ENCODE measurements at regions of chr14 and their contacts with region 1.

Region 1: DNA sequence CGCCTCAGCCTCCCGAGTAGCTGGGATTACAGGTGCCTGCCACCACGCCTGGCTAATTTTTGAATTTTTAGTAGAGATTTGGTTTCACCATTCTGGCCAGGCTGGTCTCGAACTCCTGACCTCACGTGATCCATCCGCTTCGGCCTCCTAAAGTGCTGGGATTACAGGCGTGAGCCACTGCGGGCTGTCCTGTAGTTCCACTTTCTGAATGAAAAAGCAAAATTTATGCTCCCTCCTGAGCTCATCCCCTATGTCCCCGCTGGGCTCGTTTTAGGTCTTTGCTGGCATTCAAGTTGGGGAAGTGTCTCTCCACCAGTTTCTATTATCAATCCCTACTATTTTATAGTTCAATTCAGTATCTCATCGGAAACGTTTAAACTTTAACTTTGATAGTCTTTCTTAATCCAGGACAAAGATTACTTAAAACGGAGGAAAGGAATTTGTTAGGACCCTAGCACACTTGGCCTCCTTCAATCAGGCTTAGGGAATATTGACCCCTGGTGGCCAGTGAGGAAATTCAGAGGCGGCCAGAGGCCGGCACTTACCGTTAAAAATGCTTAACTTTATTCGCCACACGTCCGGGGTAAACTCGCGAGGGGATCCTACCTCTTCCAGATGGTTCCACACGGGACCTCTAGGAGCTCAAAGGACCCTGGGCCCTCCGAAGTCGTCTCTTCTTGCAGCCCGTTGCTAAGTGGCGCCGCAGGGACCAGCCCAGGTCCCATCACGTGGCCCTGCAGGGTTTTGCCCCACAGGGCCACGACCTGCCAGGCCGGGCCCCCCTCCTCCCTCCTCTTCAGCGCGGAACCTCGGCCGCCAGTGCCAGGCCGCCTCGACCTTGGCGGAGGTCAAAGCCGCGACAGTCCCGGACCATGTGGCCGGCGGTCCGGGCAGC is 11.4 kb upstream of the DNAL1 start:
- DNase-seq: peak; percentile 73
- H3K4me3 Mint-ChIP-seq: peak overlapping the region; percentile 55
- H3K27ac Mint-ChIP-seq: peak overlapping the region; percentile 34
- H3K4me1 Mint-ChIP-seq: peaks cover 7% of the 10 kb centered on the region
- H3K27me3 Mint-ChIP-seq: peaks cover 3% of the 10 kb centered on the region

Region 2: GRCh38 chr14:73173092-73173735 is 460.1 kb before region 1 on chr14:
- CTCF ChIA-PET with region 1: no interaction called
- POLR2A ChIA-PET with region 1: no interaction called
- intact Hi-C with region 1: loop called (anchors 2 kb)
- DNase-seq: no peak
- H3K4me3 Mint-ChIP-seq: no peak overlapping the region
- H3K27ac Mint-ChIP-seq: no peak overlapping the region
- H3K4me1 Mint-ChIP-seq: no peaks in the 10 kb centered on the region
- H3K27me3 Mint-ChIP-seq: no peaks in the 10 kb centered on the region

Region 3: DNA sequence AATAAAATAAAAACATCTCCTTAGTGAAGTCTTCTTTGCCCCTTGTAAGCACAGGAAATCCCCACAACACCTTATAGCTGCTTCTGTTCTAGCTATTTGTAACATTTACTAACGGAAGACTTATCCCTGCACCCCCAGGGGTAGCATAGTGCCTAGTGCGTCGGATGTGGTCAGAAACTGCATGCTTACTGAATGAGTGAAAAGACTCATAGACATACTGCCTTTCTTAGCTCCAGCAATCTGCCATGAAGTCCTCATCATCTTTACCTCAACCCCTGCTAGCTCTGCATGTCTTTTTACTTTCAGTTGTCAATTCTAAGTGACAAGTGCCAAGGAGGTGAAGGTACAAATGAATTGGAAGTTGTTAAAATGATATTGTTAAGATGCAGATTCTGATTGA is 129.7 kb before region 1 on chr14:
- CTCF ChIA-PET with region 1: interaction called, 100 read pairs
- POLR2A ChIA-PET with region 1: no interaction called
- intact Hi-C with region 1: loop called (anchors 1 kb)
- DNase-seq: peak; percentile 14
- H3K4me3 Mint-ChIP-seq: no peak overlapping the region
- H3K27ac Mint-ChIP-seq: no peak overlapping the region
- H3K4me1 Mint-ChIP-seq: no peaks in the 10 kb centered on the region
- H3K27me3 Mint-ChIP-seq: no peaks in the 10 kb centered on the region

Region 4: GRCh38 chr14:73568381-73568781 is 65.0 kb before region 1 on chr14:
- CTCF ChIA-PET with region 1: interaction called, 23 read pairs
- POLR2A ChIA-PET with region 1: no interaction called
- intact Hi-C with region 1: loop called (anchors 2 kb)
- DNase-seq: peak; percentile 58
- H3K4me3 Mint-ChIP-seq: peak overlapping the region; percentile 84
- H3K27ac Mint-ChIP-seq: peak overlapping the region; percentile 99
- H3K4me1 Mint-ChIP-seq: peaks cover 42% of the 10 kb centered on the region
- H3K27me3 Mint-ChIP-seq: no peaks in the 10 kb centered on the region

Region 5: GRCh38 chr14:73825551-73826188 is 192.3 kb after region 1 on chr14:
- CTCF ChIA-PET with region 1: no interaction called
- POLR2A ChIA-PET with region 1: no interaction called
- intact Hi-C with region 1: loop called (anchors 5 kb)
- DNase-seq: peak; percentile 87
- H3K4me3 Mint-ChIP-seq: no peak overlapping the region
- H3K27ac Mint-ChIP-seq: no peak overlapping the region
- H3K4me1 Mint-ChIP-seq: peaks cover 15% of the 10 kb centered on the region
- H3K27me3 Mint-ChIP-seq: no peaks in the 10 kb centered on the region